ENCODE measurements at regions of chr12 and their contacts with region 1.

Region 1: GRCh38 chr12:121060149-121061001 is 21.3 kb upstream of the OASL start:
- DNase-seq: peak; percentile 66
- H3K4me3 Mint-ChIP-seq: peak overlapping the region; percentile 64
- H3K27ac Mint-ChIP-seq: peak overlapping the region; percentile 63
- H3K4me1 Mint-ChIP-seq: peaks cover 16% of the 10 kb centered on the region
- H3K27me3 Mint-ChIP-seq: no peaks in the 10 kb centered on the region

Region 2: DNA sequence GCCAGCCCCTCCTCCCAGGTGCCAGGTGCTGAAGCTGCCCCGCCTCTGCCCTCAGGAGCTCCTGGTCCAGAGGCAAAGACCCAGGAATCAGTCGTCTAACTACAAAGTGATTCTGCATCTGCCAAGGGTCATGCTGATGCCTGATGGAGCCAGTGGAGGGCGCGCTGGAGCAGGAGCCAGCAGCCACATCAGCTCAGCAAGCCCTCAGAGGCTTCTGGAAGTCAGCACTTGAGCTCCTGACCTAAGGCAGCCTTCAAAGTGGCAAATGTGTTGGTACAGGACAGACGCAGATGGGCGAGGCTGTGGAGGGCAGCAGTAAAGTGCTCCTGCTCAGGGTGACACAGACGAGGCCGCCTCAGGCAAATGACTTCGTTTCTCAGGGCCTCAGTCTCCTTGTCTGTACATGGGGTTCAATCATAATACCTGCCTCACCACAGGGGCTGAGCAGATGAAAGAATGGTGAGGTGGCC is 55.0 kb before region 1 on chr12:
- CTCF ChIA-PET with region 1: interaction called, 31 read pairs
- intact Hi-C with region 1: loop called (anchors 1 kb)
- DNase-seq: peak; percentile 76
- H3K4me3 Mint-ChIP-seq: no peak overlapping the region
- H3K27ac Mint-ChIP-seq: no peak overlapping the region
- H3K4me1 Mint-ChIP-seq: no peaks in the 10 kb centered on the region
- H3K27me3 Mint-ChIP-seq: no peaks in the 10 kb centered on the region

Region 3: GRCh38 chr12:121038861-121039666 is 21.3 kb before region 1 on chr12 and contains the start of gene OASL:
- CTCF ChIA-PET with region 1: interaction called, 11 read pairs
- intact Hi-C with region 1: loop called (anchors 1 kb)
- DNase-seq: peak; percentile 55
- H3K4me3 Mint-ChIP-seq: peak within 1 kb of the TSS; percentile 75
- H3K27ac Mint-ChIP-seq: peak within 1 kb of the TSS; percentile 70
- H3K4me1 Mint-ChIP-seq: peaks cover 50% of the 10 kb centered on the region
- H3K27me3 Mint-ChIP-seq: peaks cover 8% of the 10 kb centered on the region
- total RNA-seq, gene OASL: 12.4 to 13.4 TPM

Region 4: GRCh38 chr12:121110211-121110940 is 50.0 kb after region 1 on chr12:
- CTCF ChIA-PET with region 1: interaction called, 27 read pairs
- intact Hi-C with region 1: loop called (anchors 1 kb)
- DNase-seq: peak; percentile 80
- H3K4me3 Mint-ChIP-seq: no peak overlapping the region
- H3K27ac Mint-ChIP-seq: no peak overlapping the region
- H3K4me1 Mint-ChIP-seq: peaks cover 4% of the 10 kb centered on the region
- H3K27me3 Mint-ChIP-seq: no peaks in the 10 kb centered on the region

Region 5: DNA sequence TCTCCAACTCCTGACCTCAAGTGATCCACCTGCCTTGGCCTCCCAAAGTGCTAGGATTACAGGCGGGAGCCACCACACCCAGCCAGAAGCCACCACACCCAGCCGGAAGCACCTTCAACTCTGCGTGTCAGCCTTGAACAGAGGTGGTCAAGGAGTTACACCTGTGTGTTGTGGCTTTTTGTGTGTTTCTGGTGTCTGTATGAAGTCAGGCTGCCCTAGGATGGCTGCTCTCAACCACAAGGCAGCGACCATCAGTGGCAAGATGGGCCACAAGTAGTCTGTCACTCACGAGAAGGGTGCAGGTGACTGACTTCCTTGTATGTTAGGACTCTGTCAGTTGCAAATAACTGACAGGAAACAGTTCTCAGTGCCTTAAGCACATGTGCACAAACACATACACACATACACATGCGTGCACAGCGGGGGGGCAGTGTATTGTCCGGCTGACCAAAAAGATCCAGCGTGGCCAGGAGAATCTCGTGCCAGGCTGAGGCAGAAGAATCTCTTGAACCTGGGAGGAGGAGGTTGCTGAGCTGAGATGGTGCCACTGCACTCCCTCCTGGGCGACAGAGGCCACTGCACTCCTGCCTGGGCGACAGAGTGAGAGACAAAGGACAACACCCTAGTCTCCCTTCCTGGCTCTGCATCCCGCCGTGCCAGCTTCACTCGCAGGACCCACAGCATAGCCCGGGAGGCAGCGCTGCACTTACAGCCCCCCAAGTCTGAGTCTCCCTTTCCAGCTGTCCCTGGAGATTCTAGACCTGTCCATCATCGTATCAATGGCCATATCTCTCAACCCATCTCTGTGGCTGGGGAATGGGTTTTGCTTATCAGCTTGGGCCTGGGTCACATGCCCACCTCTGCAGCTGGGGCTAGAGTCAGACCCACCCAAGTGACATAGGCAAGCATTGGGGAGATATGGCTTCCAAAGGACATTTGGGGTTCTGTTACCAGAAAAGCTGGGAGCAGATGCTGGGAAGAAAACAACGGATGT is 163.2 kb after region 1 on chr12:
- CTCF ChIA-PET with region 1: interaction called, 5 read pairs
- intact Hi-C with region 1: loop called (anchors 1 kb)
- DNase-seq: peak; percentile 67
- H3K4me3 Mint-ChIP-seq: no peak overlapping the region
- H3K27ac Mint-ChIP-seq: peak overlapping the region; percentile 62
- H3K4me1 Mint-ChIP-seq: peaks cover 42% of the 10 kb centered on the region
- H3K27me3 Mint-ChIP-seq: no peaks in the 10 kb centered on the region

Region 6: DNA sequence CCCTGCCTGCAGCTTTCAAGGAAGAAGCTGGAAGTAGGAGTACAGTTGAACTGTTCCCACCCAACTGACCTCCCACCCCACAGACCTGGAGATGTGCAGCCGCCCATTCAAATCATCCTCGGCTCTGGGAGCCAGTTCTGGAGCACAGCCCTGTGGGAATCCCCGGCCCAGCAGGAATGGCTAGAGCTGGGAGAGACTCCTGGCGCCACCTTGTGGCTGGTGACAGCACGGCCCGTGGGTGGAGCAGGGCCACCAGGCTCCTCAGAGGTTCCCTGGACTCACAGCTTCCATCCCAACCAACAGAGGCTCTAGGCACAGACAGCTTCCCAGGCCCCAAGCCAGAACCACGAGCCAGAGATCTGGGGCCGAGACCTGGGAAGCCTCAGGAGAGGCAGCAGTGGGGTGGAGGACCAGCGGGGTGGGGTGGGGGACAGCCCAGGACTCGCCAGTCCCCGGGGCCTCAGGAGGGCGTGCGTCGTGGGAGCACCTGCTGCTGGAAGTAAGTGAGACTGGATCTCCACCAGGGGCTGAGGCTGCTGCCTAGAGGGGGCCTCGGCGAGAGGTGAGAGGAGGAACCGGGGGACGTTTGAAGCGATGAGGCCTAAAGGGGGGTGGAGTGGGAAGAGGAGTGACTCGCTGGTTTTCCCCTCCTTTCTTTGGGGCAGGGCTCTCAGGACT is 383.0 kb after region 1 on chr12:
- CTCF ChIA-PET with region 1: interaction called, 3 read pairs
- intact Hi-C with region 1: loop called (anchors 5 kb)
- DNase-seq: peak; percentile 81
- H3K4me3 Mint-ChIP-seq: no peak overlapping the region
- H3K27ac Mint-ChIP-seq: peak overlapping the region; percentile 74
- H3K4me1 Mint-ChIP-seq: peaks cover 3% of the 10 kb centered on the region
- H3K27me3 Mint-ChIP-seq: no peaks in the 10 kb centered on the region

Measured in activated naive CD4-positive, alpha-beta T cell treated with anti-CD3 and anti-CD28 coated beads for 36 hours (primary cell).